ENCODE measurements at regions of chr20 and their contacts with region 1.

Region 1: GRCh38 chr20:45779011-45779915 is 12.4 kb downstream of the WFDC3 start:
- DNase-seq: peak; percentile 98
- H3K4me3 Mint-ChIP-seq: no peak overlapping the region
- H3K27ac Mint-ChIP-seq: peak overlapping the region; percentile 88
- H3K4me1 Mint-ChIP-seq: peaks cover 58% of the 10 kb centered on the region
- H3K27me3 Mint-ChIP-seq: peaks cover 3% of the 10 kb centered on the region
- CTCF ChIP-seq: no peak

Region 2: GRCh38 chr20:45337367-45338120 is 441.7 kb before region 1 on chr20:
- CTCF ChIA-PET with region 1: interaction called, 4 read pairs
- POLR2A ChIA-PET with region 1: interaction called, 40 read pairs
- intact Hi-C with region 1: no loop called
- DNase-seq: peak; percentile 66
- H3K4me3 Mint-ChIP-seq: peak overlapping the region; percentile 45
- H3K27ac Mint-ChIP-seq: peak overlapping the region; percentile 97
- H3K4me1 Mint-ChIP-seq: peaks cover 58% of the 10 kb centered on the region
- H3K27me3 Mint-ChIP-seq: no peaks in the 10 kb centered on the region
- CTCF ChIP-seq: no peak

Region 3: DNA sequence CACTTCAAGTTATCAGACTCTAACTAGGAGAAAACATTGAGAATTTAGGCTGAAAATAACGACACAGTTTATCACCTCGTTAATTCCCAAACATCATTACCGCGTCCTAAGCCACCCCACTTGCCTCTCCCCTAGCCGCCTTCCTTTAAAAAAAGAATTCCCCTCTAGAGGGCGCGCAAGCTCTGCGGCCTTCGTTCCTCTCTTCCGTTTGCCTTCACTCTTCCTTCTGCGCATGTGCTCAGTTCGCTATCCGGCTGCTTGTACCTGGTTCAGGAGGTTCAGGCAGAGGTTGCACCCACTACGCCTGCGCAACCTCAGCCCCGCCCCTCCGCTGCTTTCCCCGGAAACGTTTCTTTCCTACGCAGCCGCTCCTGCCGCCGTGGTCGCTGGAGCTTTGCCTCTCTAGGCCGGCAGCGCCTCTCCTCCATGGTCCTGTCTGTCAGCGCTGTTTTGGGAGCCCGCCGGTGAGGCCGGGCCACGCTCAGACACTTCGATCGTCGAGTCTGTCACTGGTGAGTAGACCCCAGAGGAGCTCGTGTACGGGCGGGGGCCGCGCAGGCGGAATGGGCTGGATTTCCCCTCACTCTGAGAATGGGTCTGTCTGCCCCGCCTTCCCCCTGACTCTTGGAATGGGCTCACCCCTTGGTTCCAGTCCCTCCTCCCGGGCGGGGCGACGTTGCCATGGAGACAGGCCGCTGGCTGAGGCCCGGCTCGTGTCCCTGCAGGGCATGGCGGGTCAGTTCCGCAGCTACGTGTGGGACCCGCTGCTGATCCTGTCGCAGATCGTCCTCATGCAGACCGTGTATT is 416.3 kb before region 1 on chr20 and contains the start of gene SYS1:
- CTCF ChIA-PET with region 1: interaction called, 9 read pairs
- POLR2A ChIA-PET with region 1: interaction called, 26 read pairs
- intact Hi-C with region 1: no loop called
- DNase-seq: peak; percentile 99
- H3K4me3 Mint-ChIP-seq: peak within 1 kb of the TSS; percentile 97
- H3K27ac Mint-ChIP-seq: peak within 1 kb of the TSS; percentile 95
- H3K4me1 Mint-ChIP-seq: peaks cover 30% of the 10 kb centered on the region
- H3K27me3 Mint-ChIP-seq: no peaks in the 10 kb centered on the region
- CTCF ChIP-seq: peak; percentile 67
- total RNA-seq, gene SYS1: 19.1 and 28.2 TPM in 2 replicates

Region 4: GRCh38 chr20:45518282-45518681 is 261.0 kb before region 1 on chr20:
- CTCF ChIA-PET with region 1: interaction called, 4 read pairs
- POLR2A ChIA-PET with region 1: interaction called, 14 read pairs
- intact Hi-C with region 1: no loop called
- DNase-seq: peak; percentile 91
- H3K4me3 Mint-ChIP-seq: peak overlapping the region; percentile 21
- H3K27ac Mint-ChIP-seq: peak overlapping the region; percentile 80
- H3K4me1 Mint-ChIP-seq: peaks cover 28% of the 10 kb centered on the region
- H3K27me3 Mint-ChIP-seq: no peaks in the 10 kb centered on the region
- CTCF ChIP-seq: no peak

Region 5: DNA sequence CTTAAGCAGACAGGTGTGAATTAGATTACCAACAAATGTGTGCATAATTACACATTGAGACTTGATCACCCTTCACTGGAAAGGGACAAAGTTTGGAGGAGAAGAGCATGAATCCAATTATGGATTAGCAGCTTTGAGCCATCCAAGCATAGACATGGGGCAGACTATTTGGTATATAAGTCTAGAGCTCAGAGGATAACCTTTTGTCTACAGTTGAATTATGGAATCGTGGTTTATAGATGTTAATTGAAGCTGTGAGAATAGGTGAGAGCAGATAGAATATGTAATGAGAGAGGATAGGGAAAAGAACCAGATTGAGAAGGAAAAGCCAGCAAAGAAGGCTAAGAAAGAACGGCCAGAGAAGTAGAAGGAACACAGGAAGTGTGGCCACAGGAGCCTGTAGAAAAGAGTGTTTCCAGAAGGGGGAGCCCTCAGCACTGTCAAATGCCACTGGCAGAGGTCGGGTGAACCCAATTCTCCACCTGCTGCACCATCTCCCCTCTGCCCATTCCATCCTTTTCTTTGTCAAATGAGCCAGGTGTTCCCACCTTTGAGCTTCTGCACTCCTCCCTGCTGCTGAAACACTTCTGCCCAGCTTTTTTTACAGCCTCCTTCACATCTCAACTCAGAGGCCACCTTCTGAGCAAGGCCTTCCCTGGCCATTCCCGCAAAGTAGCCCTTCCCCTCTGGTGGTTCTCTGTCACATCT is 19.8 kb after region 1 on chr20:
- CTCF ChIA-PET with region 1: interaction called, 11 read pairs
- POLR2A ChIA-PET with region 1: interaction called, 8 read pairs
- intact Hi-C with region 1: no loop called
- DNase-seq: peak; percentile 71
- H3K4me3 Mint-ChIP-seq: no peak overlapping the region
- H3K27ac Mint-ChIP-seq: peak overlapping the region; percentile 40
- H3K4me1 Mint-ChIP-seq: peaks cover 6% of the 10 kb centered on the region
- H3K27me3 Mint-ChIP-seq: no peaks in the 10 kb centered on the region
- CTCF ChIP-seq: peak; percentile 74

Region 6: GRCh38 chr20:45857114-45857881 is 78.0 kb after region 1 on chr20 and contains the starts of genes ACOT8 and ZSWIM3:
- CTCF ChIA-PET with region 1: no interaction called
- POLR2A ChIA-PET with region 1: interaction called, 13 read pairs
- intact Hi-C with region 1: no loop called
- DNase-seq: peak; percentile 100
- H3K4me3 Mint-ChIP-seq: peak within 1 kb of the TSS; percentile 92
- H3K27ac Mint-ChIP-seq: peak within 1 kb of the TSS; percentile 92
- H3K4me1 Mint-ChIP-seq: peaks cover 16% of the 10 kb centered on the region
- H3K27me3 Mint-ChIP-seq: no peaks in the 10 kb centered on the region
- CTCF ChIP-seq: no peak
- total RNA-seq, gene ACOT8: 19.5 and 20.1 TPM in 2 replicates
- total RNA-seq, gene ZSWIM3: 1.4 and 2.4 TPM in 2 replicates